ENCODE measurements at regions of chr7 and their contacts with region 1.

Region 1: GRCh38 chr7:37181550-37181932 is 267.1 kb downstream of the ELMO1 start:
- DNase-seq: no peak
- ATAC-seq: peak; percentile 14; the same call in 2 of the 3 replicates
- H3K4me3 ChIP-seq: no peak overlapping the region
- H3K27ac ChIP-seq: no peak overlapping the region
- H3K4me1 ChIP-seq: no peaks in the 10 kb centered on the region
- H3K27me3 ChIP-seq: no peaks in the 10 kb centered on the region
- CTCF ChIP-seq: no peak
- EP300 ChIP-seq: no peak
- POLR2A ChIP-seq: no peak
- RAD21 ChIP-seq: no peak

Region 2: GRCh38 chr7:36487756-36488336 is 693.7 kb before region 1 on chr7:
- CTCF ChIA-PET with region 1: interaction called, 59 read pairs
- POLR2A ChIA-PET with region 1: no interaction called
- RAD21 ChIA-PET with region 1: interaction called, 39 read pairs
- SMC1A ChIA-PET with region 1: interaction called, 20 read pairs
- in situ Hi-C with region 1: no loop called
- intact Hi-C with region 1: loop called (anchors 2 kb)
- DNase-seq: peak; percentile 21
- ATAC-seq: peak; percentile 57; the same call in 2 of the 3 replicates
- H3K4me3 ChIP-seq: no peak overlapping the region
- H3K27ac ChIP-seq: no peak overlapping the region
- H3K4me1 ChIP-seq: no peaks in the 10 kb centered on the region
- H3K27me3 ChIP-seq: no peaks in the 10 kb centered on the region; a peak in 1 of 4 replicates
- CTCF ChIP-seq: peak; percentile 57 to 77 (median 65); a peak in 5 of 6 replicates
- EP300 ChIP-seq: no peak
- POLR2A ChIP-seq: no peak
- RAD21 ChIP-seq: peak; percentile 84

Region 3: GRCh38 chr7:36916116-36916515 is 265.4 kb before region 1 on chr7:
- CTCF ChIA-PET with region 1: interaction called, 6 read pairs
- POLR2A ChIA-PET with region 1: no interaction called
- RAD21 ChIA-PET with region 1: interaction called, 3 read pairs
- SMC1A ChIA-PET with region 1: interaction called, 10 read pairs
- in situ Hi-C with region 1: no loop called
- intact Hi-C with region 1: no loop called
- DNase-seq: no peak
- ATAC-seq: no peak
- H3K4me3 ChIP-seq: no peak overlapping the region
- H3K27ac ChIP-seq: no peak overlapping the region
- H3K4me1 ChIP-seq: no peaks in the 10 kb centered on the region
- H3K27me3 ChIP-seq: no peaks in the 10 kb centered on the region
- CTCF ChIP-seq: no peak
- EP300 ChIP-seq: no peak
- POLR2A ChIP-seq: no peak
- RAD21 ChIP-seq: no peak

Region 4: GRCh38 chr7:36979810-36980248 is 201.7 kb before region 1 on chr7:
- CTCF ChIA-PET with region 1: interaction called, 186 read pairs
- POLR2A ChIA-PET with region 1: no interaction called
- RAD21 ChIA-PET with region 1: interaction called, 119 read pairs
- SMC1A ChIA-PET with region 1: interaction called, 104 read pairs
- in situ Hi-C with region 1: loop called (anchors 5 kb)
- intact Hi-C with region 1: no loop called
- DNase-seq: no peak
- ATAC-seq: no peak
- H3K4me3 ChIP-seq: no peak overlapping the region
- H3K27ac ChIP-seq: no peak overlapping the region
- H3K4me1 ChIP-seq: no peaks in the 10 kb centered on the region
- H3K27me3 ChIP-seq: no peaks in the 10 kb centered on the region
- CTCF ChIP-seq: no peak
- EP300 ChIP-seq: no peak
- POLR2A ChIP-seq: no peak
- RAD21 ChIP-seq: no peak

Region 5: DNA sequence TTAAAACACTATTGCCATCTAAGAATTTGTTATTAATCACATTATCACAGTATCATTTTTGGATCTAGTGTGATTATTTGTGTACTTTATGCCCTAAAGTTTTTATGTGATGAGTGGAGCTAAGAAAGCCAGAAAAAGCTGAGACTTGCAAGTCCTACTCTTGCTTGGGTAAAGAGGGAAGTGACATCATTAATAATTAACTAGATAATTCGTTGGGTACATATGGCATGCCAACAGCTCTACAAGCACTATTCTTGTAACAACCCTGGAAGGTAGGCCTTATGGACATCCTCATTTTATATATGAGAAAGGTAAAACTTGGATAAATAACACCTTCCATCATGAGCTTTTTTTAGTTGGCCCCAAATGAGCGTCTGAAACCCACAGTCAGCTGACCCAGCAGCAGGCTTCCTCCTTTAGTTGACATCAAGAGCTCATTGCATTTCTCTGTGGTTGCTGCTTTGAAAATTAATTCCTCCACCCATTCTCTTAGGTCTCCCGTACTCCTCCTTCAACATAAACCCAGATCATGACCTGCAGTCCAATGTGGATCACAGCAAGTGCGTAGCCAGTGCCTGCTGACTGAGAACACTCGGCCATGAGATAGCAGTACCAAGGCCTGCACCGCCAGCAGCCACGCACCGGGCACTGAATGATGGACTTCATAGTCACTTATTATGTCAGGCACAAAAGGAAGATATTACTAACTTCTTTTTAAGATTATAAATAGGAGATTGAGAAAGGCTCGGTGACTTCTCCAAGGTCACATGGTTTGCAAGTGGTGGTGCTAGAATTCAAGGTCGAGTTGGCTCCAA is 165.3 kb before region 1 on chr7:
- CTCF ChIA-PET with region 1: interaction called, 16 read pairs
- POLR2A ChIA-PET with region 1: no interaction called
- RAD21 ChIA-PET with region 1: interaction called, 3 read pairs
- SMC1A ChIA-PET with region 1: interaction called, 13 read pairs
- in situ Hi-C with region 1: no loop called
- intact Hi-C with region 1: no loop called
- DNase-seq: no peak
- ATAC-seq: peak; percentile 57
- H3K4me3 ChIP-seq: no peak overlapping the region
- H3K27ac ChIP-seq: no peak overlapping the region
- H3K4me1 ChIP-seq: peaks cover 16% of the 10 kb centered on the region
- H3K27me3 ChIP-seq: no peaks in the 10 kb centered on the region
- CTCF ChIP-seq: no peak
- EP300 ChIP-seq: no peak
- POLR2A ChIP-seq: no peak
- RAD21 ChIP-seq: no peak

Region 6: DNA sequence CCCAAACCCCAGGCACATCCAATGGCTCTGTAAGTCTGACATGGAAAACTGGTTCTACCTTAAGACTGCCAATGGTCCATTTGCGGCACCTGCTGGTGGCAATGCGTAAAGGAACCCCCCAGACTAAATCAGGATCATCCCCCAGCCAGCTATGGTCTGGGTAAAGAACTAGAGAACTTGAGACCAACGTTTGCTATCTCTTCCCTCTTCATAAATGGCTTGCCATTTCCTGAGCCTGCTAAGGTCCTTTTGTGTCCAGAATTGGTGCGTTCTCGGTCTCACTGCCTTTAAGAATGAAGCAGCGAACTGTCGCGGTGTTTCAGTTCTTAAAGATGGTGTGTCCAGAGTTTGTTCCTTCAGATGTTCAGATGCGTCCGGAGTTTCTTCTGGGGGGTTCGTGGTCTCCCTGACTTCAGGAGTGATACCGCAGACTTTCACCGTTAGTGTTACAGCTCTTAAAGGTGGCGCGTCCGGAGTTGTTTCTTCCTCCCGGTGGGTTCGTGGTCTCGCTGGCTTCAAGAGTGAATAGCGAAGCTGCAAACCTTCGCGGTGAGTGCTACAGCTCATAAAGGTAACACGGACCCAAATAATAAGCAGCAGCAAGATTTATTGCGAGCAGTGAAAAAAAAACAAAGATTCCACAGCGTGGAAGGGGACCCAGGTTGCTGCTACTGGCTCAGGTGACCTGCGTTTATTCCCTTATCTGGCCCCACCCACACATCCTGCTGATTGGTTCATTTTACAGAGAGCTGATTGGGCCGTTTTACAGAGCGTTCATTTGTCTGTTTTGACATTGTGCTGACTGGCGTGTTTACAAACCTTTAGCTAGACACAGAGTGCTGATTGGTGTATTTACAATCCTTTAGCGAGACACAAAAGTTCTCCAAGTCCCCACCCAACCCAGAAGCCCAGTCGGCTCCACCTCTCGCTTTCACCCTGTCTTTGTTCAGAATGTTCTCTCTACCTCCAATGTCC is 171.7 kb after region 1 on chr7:
- CTCF ChIA-PET with region 1: interaction called, 12 read pairs
- POLR2A ChIA-PET with region 1: no interaction called
- RAD21 ChIA-PET with region 1: interaction called, 4 read pairs
- SMC1A ChIA-PET with region 1: interaction called, 3 read pairs
- in situ Hi-C with region 1: no loop called
- intact Hi-C with region 1: no loop called
- DNase-seq: no peak
- ATAC-seq: peak; percentile 89
- H3K4me3 ChIP-seq: peak overlapping the region; percentile 72
- H3K27ac ChIP-seq: peak overlapping the region; percentile 52; the same call in 1 of the 2 replicates
- H3K4me1 ChIP-seq: peaks cover 17% of the 10 kb centered on the region
- H3K27me3 ChIP-seq: no peaks in the 10 kb centered on the region
- CTCF ChIP-seq: peak; percentile 94 to 98 (median 97)
- EP300 ChIP-seq: no peak
- POLR2A ChIP-seq: no peak
- RAD21 ChIP-seq: peak; percentile 97